ENCODE measurements at regions of chr16 and their contacts with region 1.

Region 1: GRCh38 chr16:15777533-15778203 is 79.2 kb downstream of the MYH11 start:
- DNase-seq: no peak
- ATAC-seq: peak in 1 of 4 donors; percentile 44
- H3K4me3 ChIP-seq: no peak overlapping the region
- H3K27ac ChIP-seq: no peak overlapping the region
- H3K4me1 ChIP-seq: no peaks in the 10 kb centered on the region
- H3K27me3 ChIP-seq: no peaks in the 10 kb centered on the region
- CTCF ChIP-seq: peak; percentile 38

Region 2: DNA sequence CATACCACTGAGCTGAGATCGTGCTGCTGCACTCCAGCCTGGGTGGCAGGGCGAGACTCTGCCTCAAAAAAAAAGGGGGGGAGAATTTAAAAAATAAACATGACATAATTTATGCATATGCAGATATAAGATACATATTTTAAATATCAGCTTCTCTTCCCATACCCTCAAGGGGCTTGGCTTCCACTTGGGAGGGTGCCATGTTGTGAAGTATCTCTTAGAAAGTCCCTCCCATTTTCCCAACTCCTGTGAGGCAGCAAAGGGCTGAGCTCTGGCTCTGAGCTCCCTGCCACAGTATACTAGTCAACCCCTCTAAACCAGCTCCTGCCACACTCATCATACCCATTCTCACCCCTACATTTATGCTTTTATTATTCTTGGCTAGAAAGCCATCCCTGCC is 39.8 kb after region 1 on chr16:
- intact Hi-C with region 1: loop called in 1 of 2 experiments (anchors 5 kb)
- DNase-seq: no peak
- ATAC-seq: no peak
- H3K4me3 ChIP-seq: no peak overlapping the region
- H3K27ac ChIP-seq: no peak overlapping the region
- H3K4me1 ChIP-seq: no peaks in the 10 kb centered on the region
- H3K27me3 ChIP-seq: no peaks in the 10 kb centered on the region
- CTCF ChIP-seq: no peak

Region 3: GRCh38 chr16:16137056-16137455 is 359.4 kb after region 1 on chr16:
- intact Hi-C with region 1: loop called in 1 of 2 experiments (anchors 5 kb)
- DNase-seq: no peak
- ATAC-seq: no peak
- H3K4me3 ChIP-seq: no peak overlapping the region
- H3K27ac ChIP-seq: no peak overlapping the region
- H3K4me1 ChIP-seq: no peaks in the 10 kb centered on the region
- H3K27me3 ChIP-seq: no peaks in the 10 kb centered on the region
- CTCF ChIP-seq: no peak